Transverse colon (tissue), 4 donors: ENCODE measurements at regions of chr1 and their contacts with region 1.

Region 1: GRCh38 chr1:84427520-84428188 is 29.4 kb downstream of the DNASE2B start:
- DNase-seq: no peak
- H3K4me3 ChIP-seq: no peak overlapping the region
- H3K27ac ChIP-seq: no peak overlapping the region
- H3K4me1 ChIP-seq: no peaks in the 10 kb centered on the region
- H3K27me3 ChIP-seq: no peaks in the 10 kb centered on the region
- CTCF ChIP-seq: no peak
- EP300 ChIP-seq: no peak
- POLR2A ChIP-seq: no peak

Region 2: DNA sequence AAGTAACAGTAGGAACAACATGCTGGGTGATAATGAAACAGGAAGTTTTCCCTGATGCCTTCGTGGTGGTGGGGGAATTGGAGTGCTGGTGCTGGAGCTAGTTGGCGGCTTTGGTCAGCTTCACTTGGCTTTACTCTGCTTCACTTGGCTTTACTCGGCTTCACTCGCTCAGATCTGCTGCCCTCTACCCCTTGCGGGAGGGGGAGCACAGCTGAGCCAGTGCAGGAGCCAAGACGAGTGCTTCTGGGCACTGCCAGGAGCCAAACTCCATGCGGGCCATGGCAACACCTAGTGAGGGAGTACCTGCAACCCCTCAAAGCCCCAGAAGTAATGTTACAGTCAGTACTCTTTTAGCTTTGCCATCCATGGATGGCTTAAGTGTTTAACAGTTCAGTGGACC is 294.2 kb before region 1 on chr1:
- in situ Hi-C with region 1: loop called in 2 of 4 experiments (anchors 10 kb)
- intact Hi-C with region 1: no loop called
- DNase-seq: no peak
- H3K4me3 ChIP-seq: no peak overlapping the region
- H3K27ac ChIP-seq: no peak overlapping the region
- H3K4me1 ChIP-seq: no peaks in the 10 kb centered on the region
- H3K27me3 ChIP-seq: no peaks in the 10 kb centered on the region
- CTCF ChIP-seq: no peak
- EP300 ChIP-seq: no peak
- POLR2A ChIP-seq: no peak

Region 3: DNA sequence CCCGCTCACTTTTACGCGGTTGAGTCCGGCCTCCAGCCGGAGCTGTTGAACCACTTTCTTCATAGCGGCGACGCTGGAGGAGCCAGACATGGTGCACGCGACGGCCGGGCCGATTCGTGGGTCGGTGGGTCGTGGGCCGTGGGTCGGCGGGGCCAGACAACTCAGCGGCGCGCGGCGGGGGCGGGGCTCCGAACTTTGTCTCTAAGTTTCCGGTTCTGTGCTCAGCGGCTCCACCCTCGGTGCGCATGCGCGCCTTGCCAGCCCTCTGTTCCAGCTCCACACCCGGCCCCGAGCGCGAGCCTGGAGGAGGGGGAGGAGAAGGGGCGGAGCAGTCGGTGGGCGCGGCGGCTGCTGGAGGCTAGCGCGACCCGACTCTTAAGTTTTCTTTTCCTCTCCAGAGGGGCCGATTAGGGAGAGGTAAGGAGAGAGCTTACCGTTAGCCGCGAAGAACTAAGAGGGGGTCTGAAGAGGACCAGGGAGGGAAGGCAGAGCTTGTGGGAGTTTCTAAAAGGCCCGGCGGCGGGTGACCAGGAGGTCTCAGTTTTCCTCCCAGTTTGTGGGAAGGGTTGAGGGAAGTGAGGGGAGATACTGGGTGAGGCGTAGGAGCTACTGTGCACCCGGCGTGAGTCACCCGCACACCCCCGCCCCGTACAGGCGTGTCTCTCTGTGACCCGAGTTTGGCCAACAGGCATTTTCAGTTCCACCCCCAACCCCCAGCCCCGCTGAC is 78.5 kb after region 1 on chr1 and contains the starts of genes GNG5 and SPATA1:
- in situ Hi-C with region 1: no loop called
- intact Hi-C with region 1: no loop called
- DNase-seq: peak; percentile 99
- H3K4me3 ChIP-seq: peak within 1 kb of the TSS; percentile 63 to 93 (median 74)
- H3K27ac ChIP-seq: peak within 1 kb of the TSS; percentile 96 to 99 (median 97)
- H3K4me1 ChIP-seq: peaks cover 15 to 45% (median 31%) of the 10 kb centered on the region in 4 donors
- H3K27me3 ChIP-seq: no peaks in the 10 kb centered on the region
- CTCF ChIP-seq: no peak
- EP300 ChIP-seq: no peak
- POLR2A ChIP-seq: peak; percentile 97
- total RNA-seq, gene GNG5: 19.1 to 172 (median 127) TPM
- total RNA-seq, gene SPATA1: 0.14 to 1.6 TPM in 2 of 4 donors, not detected in the others